BJ (cell line): ENCODE measurements at regions of chrX and their contacts with region 1.

Region 1: DNA sequence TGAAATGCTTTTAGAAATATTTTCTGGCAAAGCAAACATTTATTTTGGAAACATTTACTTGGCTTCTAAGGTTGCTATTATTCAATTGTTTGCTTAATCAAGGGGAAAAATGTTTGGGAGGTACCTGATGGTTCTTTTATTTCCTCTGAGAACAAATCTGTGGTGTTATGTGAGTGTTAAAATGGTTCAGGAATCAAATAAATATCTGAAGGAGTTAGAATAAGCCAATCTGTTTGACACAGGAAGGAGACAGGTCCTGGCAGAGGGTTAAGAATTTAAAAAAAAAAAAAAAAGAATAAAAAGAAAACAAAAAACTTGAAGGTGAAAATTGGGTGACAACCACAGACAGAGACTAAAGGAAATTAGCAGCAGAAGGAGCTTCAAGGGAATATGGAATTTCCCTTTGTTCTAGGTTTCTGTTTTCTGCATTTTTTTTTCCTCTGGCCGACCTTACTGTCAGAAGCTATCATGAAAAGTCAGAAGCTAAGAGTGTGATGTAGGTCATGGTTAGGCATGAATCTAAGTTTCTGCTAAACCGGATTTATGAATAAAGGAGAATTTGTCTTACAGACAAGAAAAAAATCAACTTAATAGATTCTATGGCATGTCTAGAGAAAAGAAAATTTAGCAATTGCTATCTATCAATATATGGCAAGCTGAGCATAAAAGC is 78.6 kb upstream of the PNPLA4 start:
- DNase-seq: no peak
- H3K4me3 ChIP-seq: no peak overlapping the region
- H3K27me3 ChIP-seq: no peaks in the 10 kb centered on the region
- CTCF ChIP-seq: no peak

Region 2: DNA sequence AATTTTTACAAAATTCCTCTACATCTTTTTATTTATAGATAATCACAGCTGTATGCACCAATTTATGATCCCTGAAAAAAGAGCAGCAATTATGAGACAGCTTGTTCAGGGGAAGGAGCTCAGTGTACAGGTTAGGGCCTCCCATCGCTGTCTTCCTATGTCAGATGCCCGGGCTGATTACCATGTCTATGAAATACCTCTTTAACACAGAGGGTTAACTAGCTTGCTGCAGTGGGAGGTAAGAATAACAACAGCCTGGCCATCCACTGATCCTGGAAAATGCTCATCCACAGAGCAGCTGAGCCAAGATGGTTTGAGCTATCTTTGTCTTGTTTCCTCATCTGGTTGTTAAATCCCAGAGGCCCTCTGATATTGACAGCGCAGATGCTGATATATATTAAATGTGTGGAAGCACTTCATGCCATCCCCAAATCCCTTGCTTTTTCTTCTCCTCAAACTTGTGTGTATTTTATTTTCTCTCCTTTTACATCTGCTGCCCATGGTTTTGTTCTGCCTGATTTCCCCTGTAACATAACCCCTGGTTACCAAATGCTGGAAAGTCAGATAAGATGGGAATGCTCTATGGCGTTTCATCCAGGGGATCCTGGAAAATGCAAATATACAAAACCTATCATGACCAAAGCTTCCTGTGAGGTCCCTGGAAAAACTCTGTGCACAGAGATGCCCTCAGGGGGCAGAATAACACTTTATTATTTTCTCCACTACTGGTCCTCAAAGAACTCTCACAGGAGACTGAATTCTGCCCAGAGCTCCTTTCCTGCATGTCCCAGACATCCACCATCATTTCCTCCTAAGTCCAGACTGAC is 772.0 kb before region 1 on chrX:
- CTCF ChIA-PET with region 1: no interaction called
- POLR2A ChIA-PET with region 1: no interaction called
- DNase-seq: no peak
- H3K4me3 ChIP-seq: no peak overlapping the region
- H3K27me3 ChIP-seq: no peaks in the 10 kb centered on the region
- CTCF ChIP-seq: no peak

Region 3: GRCh38 chrX:8018934-8019333 is 13.1 kb after region 1 on chrX:
- CTCF ChIA-PET with region 1: interaction called, 10 read pairs
- POLR2A ChIA-PET with region 1: no interaction called
- DNase-seq: no peak
- H3K4me3 ChIP-seq: no peak overlapping the region
- H3K27me3 ChIP-seq: no peaks in the 10 kb centered on the region
- CTCF ChIP-seq: no peak

Region 4: DNA sequence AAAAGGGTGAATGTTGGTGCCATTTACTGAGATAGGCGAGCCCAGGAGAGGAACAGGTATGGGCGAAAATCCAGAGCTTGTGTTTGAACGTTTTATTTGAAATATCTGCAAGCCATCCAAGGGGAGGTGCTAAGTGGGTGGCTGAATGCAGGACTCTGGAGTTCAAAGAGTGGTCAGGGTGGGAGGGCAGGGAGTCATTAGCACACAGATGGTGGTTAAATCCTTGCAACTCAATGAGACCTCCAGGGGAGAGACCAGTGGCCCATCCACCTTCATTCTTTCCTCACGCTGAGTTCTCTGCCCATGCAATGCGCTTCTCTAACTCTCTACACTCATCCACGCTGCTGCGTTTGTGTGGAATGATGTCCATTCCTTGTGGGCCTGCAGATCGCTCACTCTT is 559.9 kb after region 1 on chrX:
- CTCF ChIA-PET with region 1: no interaction called
- POLR2A ChIA-PET with region 1: no interaction called
- DNase-seq: no peak
- H3K4me3 ChIP-seq: no peak overlapping the region
- H3K27me3 ChIP-seq: no peaks in the 10 kb centered on the region
- CTCF ChIP-seq: no peak

Region 5: GRCh38 chrX:8743126-8743732 is 737.4 kb after region 1 on chrX:
- CTCF ChIA-PET with region 1: interaction called, 10 read pairs
- POLR2A ChIA-PET with region 1: no interaction called
- DNase-seq: no peak
- H3K4me3 ChIP-seq: no peak overlapping the region
- H3K27me3 ChIP-seq: no peaks in the 10 kb centered on the region
- CTCF ChIP-seq: peak; percentile 69